ENCODE measurements at regions of chr10 and their contacts with region 1.

Region 1: DNA sequence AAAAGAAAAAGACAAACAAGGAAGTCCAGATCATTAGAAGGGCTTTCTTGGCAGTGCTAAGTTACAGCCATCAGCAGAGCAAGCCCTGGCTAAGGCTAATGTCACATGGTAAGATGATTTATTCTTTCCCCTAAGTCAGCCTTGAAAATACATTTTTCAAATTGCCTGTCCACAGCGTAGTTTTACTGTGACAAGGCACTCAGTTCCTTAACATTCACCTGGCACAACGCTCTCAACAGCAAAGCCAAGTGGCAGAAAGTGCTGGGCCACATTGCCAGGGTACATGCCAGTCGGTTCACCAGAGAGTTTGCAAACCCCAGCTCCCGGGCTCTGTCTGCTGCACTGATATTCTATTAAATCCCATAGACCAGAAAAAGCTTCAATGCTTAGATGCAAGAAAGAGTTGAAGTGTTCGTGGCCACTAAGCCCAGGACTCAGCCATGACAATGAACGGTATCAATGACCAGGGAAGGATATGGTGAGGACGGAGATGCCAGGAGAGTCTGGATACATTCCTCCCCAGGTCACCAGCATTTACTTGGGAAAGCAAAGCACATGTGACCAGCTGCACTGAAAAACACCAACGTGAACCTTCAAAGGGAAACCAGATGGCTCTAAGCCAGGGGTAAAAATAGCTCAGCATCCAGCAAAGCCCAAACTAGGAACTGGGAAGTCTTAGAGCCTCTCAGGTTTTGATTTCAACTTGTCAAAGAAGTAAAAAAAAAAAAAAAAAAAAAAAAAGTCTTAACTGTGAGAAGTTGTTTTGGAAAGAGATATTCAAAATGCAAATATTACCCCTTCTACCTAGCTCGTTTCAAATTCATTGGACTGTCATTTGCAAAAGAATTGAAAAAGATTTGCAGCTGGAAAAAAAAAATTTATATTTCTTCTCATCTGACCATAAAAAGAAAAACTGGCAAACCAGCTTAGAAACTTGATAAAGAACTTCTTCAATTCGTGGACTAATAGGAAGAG is 23.9 kb upstream of the MPP7 start:
- DNase-seq: peak; percentile 71 to 76
- ATAC-seq: peak; percentile 97
- H3K4me3 ChIP-seq: peak overlapping the region; percentile 26 to 43 (median 36)
- H3K27ac ChIP-seq: peak overlapping the region; percentile 71 to 89 (median 80)
- H3K4me1 ChIP-seq: peaks cover 17 to 20% of the 10 kb centered on the region in 2 donors
- H3K27me3 ChIP-seq: no peaks in the 10 kb centered on the region
- CTCF ChIP-seq: no peak
- POLR2A ChIP-seq: no peak

Region 2: GRCh38 chr10:28280652-28281051 is 46.2 kb before region 1 on chr10:
- in situ Hi-C with region 1: no loop called
- intact Hi-C with region 1: loop called (anchors 5 kb)
- DNase-seq: no peak
- ATAC-seq: no peak
- H3K4me3 ChIP-seq: no peak overlapping the region
- H3K27ac ChIP-seq: peak overlapping the region in 3 of 4 donors; percentile 61 to 72 (median 72)
- H3K4me1 ChIP-seq: peaks cover 44 to 51% of the 10 kb centered on the region in 2 donors
- H3K27me3 ChIP-seq: no peaks in the 10 kb centered on the region
- CTCF ChIP-seq: no peak
- POLR2A ChIP-seq: no peak

Region 3: GRCh38 chr10:28302638-28303488 is 23.9 kb before region 1 on chr10 and contains the start of gene MPP7:
- in situ Hi-C with region 1: no loop called
- intact Hi-C with region 1: loop called (anchors 1 kb)
- DNase-seq: peak; percentile 95 to 98
- ATAC-seq: peak; percentile 99 to 100
- H3K4me3 ChIP-seq: peak within 1 kb of the TSS; percentile 71 to 87 (median 82)
- H3K27ac ChIP-seq: peak within 1 kb of the TSS; percentile 81 to 95 (median 91)
- H3K4me1 ChIP-seq: peaks cover 16 to 23% of the 10 kb centered on the region in 2 donors
- H3K27me3 ChIP-seq: no peaks in the 10 kb centered on the region
- CTCF ChIP-seq: peak; percentile 29 to 72 (median 43)
- POLR2A ChIP-seq: peak; percentile 31 to 62
- total RNA-seq, gene MPP7: 3.8 to 10.7 (median 6.4) TPM

Region 4: DNA sequence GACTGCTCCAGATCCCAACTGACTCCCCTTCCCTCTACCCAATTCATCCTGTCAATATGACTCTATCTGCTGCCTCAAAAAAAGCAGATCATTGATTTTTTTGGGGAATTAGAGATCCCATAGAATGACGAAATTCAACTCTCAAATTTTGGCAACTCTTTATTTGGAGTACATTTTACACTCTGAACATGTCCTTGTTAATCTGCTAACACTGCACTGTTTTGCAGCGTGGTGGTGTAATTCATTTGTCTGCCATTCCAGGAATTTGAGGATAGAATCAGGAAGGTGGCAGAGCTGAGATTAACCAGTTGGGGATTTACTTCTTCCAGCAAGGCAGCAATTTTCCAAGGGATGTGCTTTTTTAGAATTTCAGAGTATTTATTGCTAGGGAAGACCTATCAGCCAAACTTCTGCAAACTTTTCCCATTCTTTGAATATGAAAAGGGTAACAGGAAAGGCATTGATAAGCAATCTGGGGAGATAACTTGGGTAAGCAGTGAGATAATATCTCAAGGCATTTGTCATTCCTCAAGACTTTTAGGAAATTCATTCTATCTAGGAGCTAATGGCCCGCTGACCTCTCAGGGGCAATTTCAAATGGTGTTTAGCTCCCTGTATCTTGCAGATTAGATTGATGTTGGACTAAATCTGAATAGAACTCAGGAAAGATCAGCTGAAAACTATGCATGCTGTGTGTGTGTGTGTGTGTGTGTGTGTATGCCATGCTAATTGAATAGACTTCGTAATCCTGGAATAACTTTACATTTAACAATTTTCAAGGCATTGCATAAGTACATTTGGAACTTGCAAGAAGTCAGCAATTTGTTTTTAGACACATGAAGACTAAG is 360.3 kb after region 1 on chr10:
- in situ Hi-C with region 1: no loop called
- intact Hi-C with region 1: no loop called
- DNase-seq: no peak
- ATAC-seq: no peak
- H3K4me3 ChIP-seq: no peak overlapping the region
- H3K27ac ChIP-seq: no peak overlapping the region
- H3K4me1 ChIP-seq: no peaks in the 10 kb centered on the region
- H3K27me3 ChIP-seq: peaks cover 0 to 1% (median 0%) of the 10 kb centered on the region in 3 donors
- CTCF ChIP-seq: no peak
- POLR2A ChIP-seq: no peak

Measured in gastrocnemius medialis (tissue), 4 donors.